ENCODE measurements at regions of chr1 and their contacts with region 1.

Region 1: GRCh38 chr1:59971464-59971911 is 44.9 kb upstream of the CYP2J2 start:
- DNase-seq: peak; percentile 50 to 74
- H3K4me3 ChIP-seq: no peak overlapping the region
- H3K27ac ChIP-seq: no peak overlapping the region
- H3K4me1 ChIP-seq: no peaks in the 10 kb centered on the region
- H3K27me3 ChIP-seq: 0 out of 2 replicates have a peak, but pooled peaks cover 4% of the 10 kb centered on the region
- CTCF ChIP-seq: peak; percentile 94

Region 2: GRCh38 chr1:60765204-60765603 is 793.7 kb after region 1 on chr1:
- CTCF ChIA-PET with region 1: no interaction called
- POLR2A ChIA-PET with region 1: no interaction called
- intact Hi-C with region 1: loop called (anchors 10 kb)
- DNase-seq: peak in 1 of 2 experiments; percentile 12
- H3K4me3 ChIP-seq: no peak overlapping the region
- H3K27ac ChIP-seq: no peak overlapping the region
- H3K4me1 ChIP-seq: no peaks in the 10 kb centered on the region
- H3K27me3 ChIP-seq: no peaks in the 10 kb centered on the region
- CTCF ChIP-seq: peak; percentile 74

Region 3: DNA sequence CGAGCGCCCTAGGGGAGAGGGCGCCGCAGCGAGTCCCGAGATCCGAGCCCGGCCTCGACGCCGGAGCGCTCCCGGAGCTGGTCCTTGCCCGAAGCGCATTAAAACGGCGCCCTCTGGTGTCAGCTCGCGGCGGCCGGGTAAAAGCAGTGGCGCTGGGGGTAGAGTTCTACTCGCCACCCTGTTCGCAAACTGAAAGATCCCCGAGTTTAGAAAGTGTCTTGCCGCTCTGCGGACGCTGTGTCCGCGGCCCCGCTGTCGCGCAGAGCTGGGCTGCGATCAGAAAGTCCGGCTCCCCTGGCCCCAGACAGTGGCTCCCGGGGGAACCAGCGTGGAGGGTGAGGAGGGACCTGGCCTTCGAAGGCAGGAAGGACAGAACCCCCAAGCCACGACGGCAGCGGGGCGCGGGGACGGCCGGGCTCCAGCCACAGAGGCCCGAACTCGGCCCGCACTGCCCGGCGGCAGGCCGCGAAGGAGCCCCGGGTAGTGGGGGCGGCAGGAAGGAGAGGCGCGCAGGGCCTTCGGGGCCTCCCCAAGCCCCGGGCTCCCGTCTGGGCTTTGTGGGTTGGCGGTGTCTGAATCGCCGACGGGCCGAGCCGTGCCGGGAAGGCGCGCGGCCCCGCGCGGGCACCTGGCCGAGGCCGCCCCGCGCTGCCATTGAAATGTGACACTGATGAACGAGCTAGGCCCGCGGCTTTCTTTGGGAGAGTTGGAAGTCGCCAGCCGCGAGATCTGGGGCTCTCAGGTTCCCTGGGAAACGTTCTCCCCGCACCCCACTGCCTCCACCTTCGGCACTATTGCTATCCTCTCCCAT is 1071.7 kb after region 1 on chr1:
- CTCF ChIA-PET with region 1: no interaction called
- POLR2A ChIA-PET with region 1: no interaction called
- intact Hi-C with region 1: loop called (anchors 1 kb)
- DNase-seq: peak; percentile 40 to 90
- H3K4me3 ChIP-seq: peak overlapping the region; percentile 59
- H3K27ac ChIP-seq: no peak overlapping the region
- H3K4me1 ChIP-seq: no peaks in the 10 kb centered on the region
- H3K27me3 ChIP-seq: no peaks in the 10 kb centered on the region
- CTCF ChIP-seq: peak; percentile 81

Region 4: DNA sequence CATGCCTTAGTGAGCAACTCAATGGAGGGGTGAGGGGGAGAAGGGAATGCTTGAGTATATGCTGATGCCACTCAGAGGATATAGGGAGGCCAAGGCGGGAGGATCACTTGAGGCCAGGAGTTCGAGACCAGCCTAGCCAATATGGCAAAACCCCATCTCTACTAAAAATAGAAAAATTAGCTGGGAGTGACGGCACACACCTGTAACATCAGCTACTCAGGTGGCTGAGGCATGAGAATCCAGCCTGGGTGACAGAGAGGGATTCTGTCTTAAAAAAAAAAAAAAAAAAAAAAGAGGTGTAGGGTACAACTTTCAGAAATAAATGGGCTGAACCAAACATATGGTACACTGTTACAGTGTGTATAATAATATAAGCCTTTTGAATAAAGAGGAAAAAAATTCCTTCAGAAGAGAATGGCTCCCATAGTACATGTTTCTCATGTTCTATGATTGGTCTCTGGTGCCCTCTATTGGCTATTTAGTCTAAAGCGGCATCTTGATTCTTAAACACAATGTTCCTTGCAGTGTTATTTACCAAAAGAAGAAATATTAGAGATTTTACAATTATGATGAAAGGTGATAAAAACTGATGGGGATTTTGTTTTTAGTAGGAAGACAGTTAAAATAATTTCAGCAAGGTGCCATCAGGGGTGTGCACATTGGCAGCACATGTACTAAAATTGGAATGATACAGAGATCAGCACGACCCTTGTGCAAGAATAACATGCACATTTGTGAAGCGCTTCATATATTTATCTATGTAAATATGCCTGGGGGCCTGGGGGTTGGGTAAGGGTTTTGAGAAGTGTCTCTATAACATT is 1880.6 kb after region 1 on chr1:
- CTCF ChIA-PET with region 1: interaction called, 4 read pairs
- POLR2A ChIA-PET with region 1: no interaction called
- intact Hi-C with region 1: loop called (anchors 2 kb)
- DNase-seq: peak in 1 of 2 experiments; percentile 37
- H3K4me3 ChIP-seq: no peak overlapping the region
- H3K27ac ChIP-seq: no peak overlapping the region
- H3K4me1 ChIP-seq: no peaks in the 10 kb centered on the region
- H3K27me3 ChIP-seq: no peaks in the 10 kb centered on the region
- CTCF ChIP-seq: peak; percentile 78

Measured in PC-9 (cell line).